ENCODE measurements at regions of chr10 and their contacts with region 1.

Region 1: GRCh38 chr10:11472158-11472753 is 139.2 kb downstream of the USP6NL start:
- DNase-seq: peak; percentile 54
- H3K4me3 Mint-ChIP-seq: no peak overlapping the region
- H3K27ac Mint-ChIP-seq: no peak overlapping the region
- H3K4me1 Mint-ChIP-seq: no peaks in the 10 kb centered on the region
- H3K27me3 Mint-ChIP-seq: peaks cover 3% of the 10 kb centered on the region

Region 2: DNA sequence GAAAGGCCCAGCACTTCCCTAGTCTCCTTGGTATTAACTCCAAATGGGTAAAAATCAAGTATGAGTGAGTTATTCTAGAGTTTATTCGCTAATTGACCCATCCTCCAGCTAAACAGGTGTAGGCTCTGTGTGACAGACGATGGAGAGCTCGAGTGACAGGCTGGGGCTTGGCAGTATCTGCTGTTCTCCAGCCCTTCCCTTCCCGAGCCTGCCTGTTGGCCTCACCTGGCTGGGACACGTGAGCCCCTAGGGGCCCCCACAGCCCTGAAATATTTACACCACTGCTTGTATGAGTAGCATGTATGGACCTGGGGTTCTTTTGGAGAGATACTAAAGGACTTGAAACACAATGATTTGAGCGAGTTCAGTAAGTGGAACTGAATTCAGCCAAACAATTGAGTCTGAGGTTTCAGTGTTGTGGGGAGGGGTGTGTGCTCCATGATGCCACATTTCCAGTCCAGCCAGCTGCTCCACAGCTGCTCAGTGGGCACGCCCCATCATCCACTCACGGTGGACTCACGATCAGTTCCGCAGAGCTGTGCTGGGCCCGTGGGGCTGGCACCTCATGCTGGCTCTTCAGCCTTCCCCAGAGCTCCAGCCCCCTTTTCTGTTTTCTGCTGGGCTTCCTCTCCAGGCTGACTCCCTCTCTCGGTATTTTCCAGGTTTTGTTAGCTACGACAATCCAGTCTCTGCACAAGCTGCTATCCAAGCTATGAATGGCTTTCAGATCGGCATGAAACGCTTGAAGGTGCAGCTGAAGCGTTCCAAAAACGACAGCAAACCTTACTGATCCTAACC is 143.8 kb before region 1 on chr10:
- intact Hi-C with region 1: loop called (anchors 10 kb)
- DNase-seq: no peak
- H3K4me3 Mint-ChIP-seq: no peak overlapping the region
- H3K27ac Mint-ChIP-seq: peak overlapping the region; percentile 26
- H3K4me1 Mint-ChIP-seq: peaks cover 25% of the 10 kb centered on the region
- H3K27me3 Mint-ChIP-seq: no peaks in the 10 kb centered on the region

Region 3: GRCh38 chr10:11387551-11388222 is 84.6 kb before region 1 on chr10:
- intact Hi-C with region 1: no loop called
- DNase-seq: no peak
- H3K4me3 Mint-ChIP-seq: no peak overlapping the region
- H3K27ac Mint-ChIP-seq: no peak overlapping the region
- H3K4me1 Mint-ChIP-seq: no peaks in the 10 kb centered on the region
- H3K27me3 Mint-ChIP-seq: peaks cover 11% of the 10 kb centered on the region

Region 4: DNA sequence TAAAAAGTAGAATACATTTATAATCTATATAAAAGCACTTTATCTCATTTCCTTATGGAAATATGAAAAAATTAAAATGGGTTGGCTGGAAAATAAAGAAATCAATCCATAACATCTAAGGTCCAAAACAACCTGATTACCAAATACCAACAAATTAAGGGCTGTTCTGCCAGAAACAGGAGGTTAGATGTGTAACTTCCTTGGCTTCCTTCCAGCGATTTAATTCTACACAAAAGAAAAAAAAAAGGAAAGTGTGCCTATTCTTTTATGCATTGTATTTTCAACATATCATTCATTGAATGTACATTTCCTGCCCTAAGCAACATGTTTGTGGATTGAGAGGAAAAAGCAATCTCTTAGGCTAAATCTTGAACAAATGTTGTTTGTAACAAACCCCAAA is 175.4 kb after region 1 on chr10:
- intact Hi-C with region 1: no loop called
- DNase-seq: no peak
- H3K4me3 Mint-ChIP-seq: no peak overlapping the region
- H3K27ac Mint-ChIP-seq: no peak overlapping the region
- H3K4me1 Mint-ChIP-seq: no peaks in the 10 kb centered on the region
- H3K27me3 Mint-ChIP-seq: peaks cover 1% of the 10 kb centered on the region

Measured in activated T-helper 2 cell treated with anti-CD3 and anti-CD28 coated beads, Interferon-gamma antibody, Interleukin-2, Interleukin-4, amounts not matched to agents 10 μg/mL and 5 μg/mL and 100 μg/mL, durations not matched to agents 14 hours and 24 hours and 36 hours (primary cell).